ENCODE measurements at regions of chr9 and their contacts with region 1.

Region 1: GRCh38 chr9:114653556-114654159 is 3.9 kb downstream of the TEX53 start:
- DNase-seq: peak; percentile 73 to 87 (median 80)
- H3K4me3 ChIP-seq: no peak overlapping the region
- H3K27ac ChIP-seq: peak overlapping the region in 1 of 2 experiments; percentile 8
- H3K4me1 ChIP-seq: peaks cover 0 to 7% (median 6%) of the 10 kb centered on the region in 4 experiments
- H3K27me3 ChIP-seq: no peaks in the 10 kb centered on the region

Region 2: DNA sequence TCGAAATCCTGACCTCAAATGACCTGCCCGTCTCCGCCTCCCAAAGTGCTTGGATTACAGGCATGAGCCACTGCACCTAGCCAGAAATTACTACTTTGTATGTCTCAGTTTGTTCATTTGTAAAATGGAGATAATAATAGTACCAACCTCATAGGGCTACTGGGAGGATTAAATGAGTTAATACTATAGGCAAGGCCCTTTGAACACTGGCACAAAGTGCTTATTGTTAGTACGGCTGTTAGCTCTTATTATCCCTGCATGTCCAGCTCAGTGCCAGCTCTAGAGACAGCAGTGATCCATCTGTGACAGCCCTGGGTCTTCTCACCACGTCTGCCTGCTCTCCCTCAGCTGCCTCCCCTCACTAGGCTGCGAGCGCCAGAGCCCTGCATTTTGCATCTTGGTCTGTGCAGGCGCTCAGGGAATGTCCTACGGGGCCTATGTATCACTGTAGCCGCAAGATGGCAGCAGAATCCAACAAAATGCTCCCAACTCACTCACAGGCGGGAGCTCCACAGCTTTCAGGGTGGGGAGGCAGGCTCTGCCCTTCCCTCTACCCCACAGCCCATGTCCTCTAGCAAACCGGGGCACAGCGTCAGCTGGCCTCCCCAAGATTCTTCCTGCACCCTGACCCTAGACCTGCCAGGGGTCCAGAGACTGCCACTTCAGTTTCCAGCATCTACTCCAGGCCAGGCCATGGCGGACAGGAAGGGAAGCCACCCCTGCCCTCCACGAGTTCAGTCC is 248.2 kb before region 1 on chr9:
- CTCF ChIA-PET with region 1: interaction called, 110 read pairs
- POLR2A ChIA-PET with region 1: no interaction called
- DNase-seq: peak; percentile 79 to 90 (median 86)
- H3K4me3 ChIP-seq: no peak overlapping the region
- H3K27ac ChIP-seq: no peak overlapping the region
- H3K4me1 ChIP-seq: peaks cover 0 to 8% (median 7%) of the 10 kb centered on the region in 4 experiments
- H3K27me3 ChIP-seq: no peaks in the 10 kb centered on the region

Region 3: GRCh38 chr9:114442022-114442421 is 211.6 kb before region 1 on chr9:
- CTCF ChIA-PET with region 1: interaction called, 88 read pairs
- POLR2A ChIA-PET with region 1: no interaction called
- DNase-seq: no peak
- H3K4me3 ChIP-seq: no peak overlapping the region
- H3K27ac ChIP-seq: no peak overlapping the region
- H3K4me1 ChIP-seq: peaks cover 0 to 2% (median 0%) of the 10 kb centered on the region in 4 experiments
- H3K27me3 ChIP-seq: no peaks in the 10 kb centered on the region

Region 4: GRCh38 chr9:114505187-114506081 is 148.2 kb before region 1 on chr9 and contains the start of gene WHRN:
- CTCF ChIA-PET with region 1: interaction called, 11 read pairs
- POLR2A ChIA-PET with region 1: no interaction called
- DNase-seq: peak; percentile 95 to 96 (median 96)
- H3K4me3 ChIP-seq: peak within 1 kb of the TSS; percentile 43 to 81 (median 57)
- H3K27ac ChIP-seq: peak within 1 kb of the TSS in 1 of 2 experiments; percentile 22
- H3K4me1 ChIP-seq: peaks cover 0 to 26% (median 19%) of the 10 kb centered on the region in 4 experiments
- H3K27me3 ChIP-seq: peaks cover 0 to 39% (median 24%) of the 10 kb centered on the region in 5 experiments

Region 5: GRCh38 chr9:114611516-114612271 is 42.0 kb before region 1 on chr9:
- CTCF ChIA-PET with region 1: interaction called, 16 read pairs
- POLR2A ChIA-PET with region 1: no interaction called
- DNase-seq: peak; percentile 25 to 62 (median 56)
- H3K4me3 ChIP-seq: peak overlapping the region; percentile 60 to 89 (median 77)
- H3K27ac ChIP-seq: peak overlapping the region; percentile 47 to 82
- H3K4me1 ChIP-seq: peaks cover 3 to 46% (median 42%) of the 10 kb centered on the region in 4 experiments
- H3K27me3 ChIP-seq: no peaks in the 10 kb centered on the region

Region 6: GRCh38 chr9:114805670-114806525 is 152.2 kb after region 1 on chr9 and contains the start of gene TNFSF15:
- CTCF ChIA-PET with region 1: no interaction called
- POLR2A ChIA-PET with region 1: no interaction called
- DNase-seq: peak; percentile 40 to 69 (median 65)
- H3K4me3 ChIP-seq: peak within 1 kb of the TSS in 5 of 7 experiments; percentile 11 to 64 (median 41)
- H3K27ac ChIP-seq: no peak within 1 kb of the TSS
- H3K4me1 ChIP-seq: peaks cover 6 to 15% (median 10%) of the 10 kb centered on the region in 4 experiments
- H3K27me3 ChIP-seq: no peaks in the 10 kb centered on the region